ENCODE measurements at regions of chr5 and their contacts with region 1.

Region 1: DNA sequence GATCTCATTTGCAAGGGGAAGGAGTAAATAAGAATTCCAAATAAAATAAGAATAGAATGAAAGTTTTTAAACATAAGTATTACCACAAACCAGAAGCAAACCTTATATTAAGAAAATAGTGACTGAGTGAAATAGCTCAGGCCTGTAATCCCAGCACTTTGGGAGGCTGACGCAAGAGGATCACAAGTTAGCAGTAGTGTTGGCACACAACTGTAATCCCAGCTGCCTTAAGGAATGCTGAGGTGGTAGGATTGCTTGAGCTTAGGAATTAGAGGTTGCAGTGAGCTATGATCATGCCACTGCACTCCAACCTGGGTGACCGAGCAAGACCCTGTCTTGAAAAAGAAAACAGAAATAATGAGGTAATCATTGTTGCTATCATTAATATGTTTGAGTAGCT is 47.0 kb downstream of the APC start:
- DNase-seq: no peak
- ATAC-seq: no peak
- H3K4me3 ChIP-seq: no peak overlapping the region
- H3K4me3 Mint-ChIP-seq: no peak overlapping the region
- H3K27ac ChIP-seq: no peak overlapping the region
- H3K27ac Mint-ChIP-seq: no peak overlapping the region
- H3K4me1 ChIP-seq: no peaks in the 10 kb centered on the region
- H3K4me1 Mint-ChIP-seq: no peaks in the 10 kb centered on the region
- H3K27me3 ChIP-seq: no peaks in the 10 kb centered on the region
- H3K27me3 Mint-ChIP-seq: no peaks in the 10 kb centered on the region
- CTCF ChIP-seq: no peak

Region 2: DNA sequence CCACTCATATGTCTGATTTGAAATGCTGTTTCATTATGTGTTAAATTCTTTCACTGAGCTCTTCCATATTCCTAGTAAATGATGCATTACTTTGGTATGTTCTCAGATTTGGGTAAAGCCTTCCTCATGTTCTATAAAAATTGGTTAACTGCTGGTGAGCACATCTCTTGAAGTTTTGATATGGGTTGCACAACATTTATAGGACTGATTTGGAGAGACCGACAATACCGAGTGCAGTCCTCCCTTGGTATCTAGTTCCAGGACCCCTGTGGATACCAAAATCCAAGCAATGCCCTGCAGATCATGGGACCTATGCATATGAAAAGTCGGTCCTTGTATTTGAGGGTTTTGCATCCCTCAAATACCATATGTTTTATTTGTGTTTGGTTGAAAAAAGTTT is 1654.8 kb before region 1 on chr5:
- CTCF ChIA-PET with region 1: no interaction called
- POLR2A ChIA-PET with region 1: no interaction called
- intact Hi-C with region 1: loop called (anchors 10 kb)
- DNase-seq: no peak
- ATAC-seq: no peak
- H3K4me3 ChIP-seq: no peak overlapping the region
- H3K4me3 Mint-ChIP-seq: no peak overlapping the region
- H3K27ac ChIP-seq: no peak overlapping the region
- H3K27ac Mint-ChIP-seq: no peak overlapping the region
- H3K4me1 ChIP-seq: no peaks in the 10 kb centered on the region
- H3K4me1 Mint-ChIP-seq: no peaks in the 10 kb centered on the region
- H3K27me3 ChIP-seq: no peaks in the 10 kb centered on the region
- H3K27me3 Mint-ChIP-seq: no peaks in the 10 kb centered on the region
- CTCF ChIP-seq: no peak

Region 3: GRCh38 chr5:112823623-112824596 is 39.2 kb after region 1 on chr5:
- CTCF ChIA-PET with region 1: no interaction called
- POLR2A ChIA-PET with region 1: no interaction called
- intact Hi-C with region 1: loop called (anchors 5 kb)
- DNase-seq: no peak
- ATAC-seq: no peak
- H3K4me3 ChIP-seq: no peak overlapping the region
- H3K4me3 Mint-ChIP-seq: no peak overlapping the region
- H3K27ac ChIP-seq: peak overlapping the region in 1 of 2 donors; percentile 14
- H3K27ac Mint-ChIP-seq: no peak overlapping the region
- H3K4me1 ChIP-seq: peaks cover 0 to 5% of the 10 kb centered on the region in 2 donors
- H3K4me1 Mint-ChIP-seq: peaks cover 17% of the 10 kb centered on the region
- H3K27me3 ChIP-seq: no peaks in the 10 kb centered on the region
- H3K27me3 Mint-ChIP-seq: no peaks in the 10 kb centered on the region
- CTCF ChIP-seq: no peak

Region 4: GRCh38 chr5:113344973-113345940 is 560.5 kb after region 1 on chr5:
- CTCF ChIA-PET with region 1: no interaction called
- POLR2A ChIA-PET with region 1: no interaction called
- intact Hi-C with region 1: no loop called
- DNase-seq: no peak
- ATAC-seq: no peak
- H3K4me3 ChIP-seq: no peak overlapping the region
- H3K4me3 Mint-ChIP-seq: no peak overlapping the region
- H3K27ac ChIP-seq: no peak overlapping the region
- H3K27ac Mint-ChIP-seq: no peak overlapping the region
- H3K4me1 ChIP-seq: no peaks in the 10 kb centered on the region
- H3K4me1 Mint-ChIP-seq: no peaks in the 10 kb centered on the region
- H3K27me3 ChIP-seq: peaks cover 0 to 13% (median 2%) of the 10 kb centered on the region in 4 experiments
- H3K27me3 Mint-ChIP-seq: peaks cover 45% of the 10 kb centered on the region
- CTCF ChIP-seq: no peak

Measured in B cell (primary cell).